Esophagus muscularis mucosa (tissue), 4 donors: ENCODE measurements at regions of chr5 and their contacts with region 1.

Region 1: DNA sequence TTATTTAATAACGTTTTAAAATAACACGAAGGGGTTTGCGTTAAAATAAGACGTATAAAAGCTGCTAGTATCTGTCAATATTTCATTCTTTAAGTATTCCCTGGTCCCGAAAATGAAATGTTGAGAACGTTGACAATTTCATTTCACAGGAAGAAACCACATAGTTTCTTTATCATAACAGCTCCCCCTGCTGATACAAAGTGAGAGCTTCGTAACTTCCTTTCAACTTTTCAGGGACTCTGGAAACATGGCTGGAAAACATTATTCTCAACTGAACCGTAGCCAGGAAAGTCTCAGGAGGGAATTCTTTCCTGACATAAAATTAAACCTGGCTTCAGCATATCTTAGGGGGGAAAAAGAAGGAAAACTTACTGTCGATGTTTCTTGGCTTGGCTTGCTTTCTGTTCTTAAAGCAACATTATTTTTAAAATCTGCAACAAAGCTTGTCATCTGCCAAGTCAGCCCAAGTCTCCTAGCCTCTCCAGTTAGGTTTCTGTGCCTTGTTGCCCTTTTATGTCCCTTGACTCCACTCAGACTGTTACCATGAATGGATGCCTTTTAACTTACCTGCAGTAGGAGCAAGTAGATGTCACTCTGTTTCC is 122.9 kb upstream of the DAB2 start:
- DNase-seq: no peak
- H3K4me3 ChIP-seq: no peak overlapping the region
- H3K27ac ChIP-seq: peak overlapping the region; percentile 1 to 35 (median 16)
- H3K4me1 ChIP-seq: peaks cover 0 to 18% (median 14%) of the 10 kb centered on the region in 4 donors
- H3K27me3 ChIP-seq: no peaks in the 10 kb centered on the region
- CTCF ChIP-seq: peak; percentile 67 to 76 (median 74)
- EP300 ChIP-seq: no peak
- POLR2A ChIP-seq: no peak

Region 2: GRCh38 chr5:39376293-39376714 is 171.3 kb before region 1 on chr5:
- intact Hi-C with region 1: loop called (anchors 2 kb)
- DNase-seq: no peak
- H3K4me3 ChIP-seq: no peak overlapping the region
- H3K27ac ChIP-seq: no peak overlapping the region
- H3K4me1 ChIP-seq: peaks cover 0 to 4% (median 0%) of the 10 kb centered on the region in 4 donors
- H3K27me3 ChIP-seq: no peaks in the 10 kb centered on the region
- CTCF ChIP-seq: peak; percentile 75 to 86 (median 76)
- EP300 ChIP-seq: no peak
- POLR2A ChIP-seq: no peak

Region 3: GRCh38 chr5:39424736-39425637 is 122.7 kb before region 1 on chr5 and contains the start of gene DAB2:
- intact Hi-C with region 1: loop called (anchors 2 kb)
- DNase-seq: peak; percentile 97
- H3K4me3 ChIP-seq: peak within 1 kb of the TSS; percentile 60 to 75 (median 66)
- H3K27ac ChIP-seq: peak within 1 kb of the TSS; percentile 84 to 89 (median 86)
- H3K4me1 ChIP-seq: peaks cover 23 to 67% (median 61%) of the 10 kb centered on the region in 4 donors
- H3K27me3 ChIP-seq: no peaks in the 10 kb centered on the region
- CTCF ChIP-seq: peak; percentile 42 to 57 (median 49)
- EP300 ChIP-seq: no peak
- POLR2A ChIP-seq: peak; percentile 58
- total RNA-seq, gene DAB2: 48.7 to 84.3 (median 55.1) TPM